ENCODE measurements at regions of chr2 and their contacts with region 1.

Region 1: GRCh38 chr2:155377266-155377680 is 678.8 kb downstream of the KCNJ3 start:
- ATAC-seq: peak in 5 of 8 experiments; percentile 16 to 57 (median 22)
- H3K4me3 ChIP-seq: no peak overlapping the region
- H3K27ac ChIP-seq: no peak overlapping the region
- H3K4me1 ChIP-seq: no peaks in the 10 kb centered on the region

Region 2: GRCh38 chr2:153543639-153544071 is 1833.6 kb before region 1 on chr2:
- in situ Hi-C with region 1: no loop called
- ATAC-seq: peak; percentile 56 to 100 (median 92)
- H3K4me3 ChIP-seq: no peak overlapping the region
- H3K27ac ChIP-seq: no peak overlapping the region
- H3K4me1 ChIP-seq: peaks cover 0 to 11% of the 10 kb centered on the region in 2 donors

Region 3: GRCh38 chr2:156341452-156342253 is 964.4 kb after region 1 on chr2:
- in situ Hi-C with region 1: loop called in 1 of 9 experiments (anchors 25 kb)
- ATAC-seq: peak; percentile 63 to 82 (median 70)
- H3K4me3 ChIP-seq: peak overlapping the region; percentile 59 to 93 (median 80)
- H3K27ac ChIP-seq: peak overlapping the region; percentile 9 to 77
- H3K4me1 ChIP-seq: peaks cover 0 to 3% of the 10 kb centered on the region in 2 donors

Region 4: DNA sequence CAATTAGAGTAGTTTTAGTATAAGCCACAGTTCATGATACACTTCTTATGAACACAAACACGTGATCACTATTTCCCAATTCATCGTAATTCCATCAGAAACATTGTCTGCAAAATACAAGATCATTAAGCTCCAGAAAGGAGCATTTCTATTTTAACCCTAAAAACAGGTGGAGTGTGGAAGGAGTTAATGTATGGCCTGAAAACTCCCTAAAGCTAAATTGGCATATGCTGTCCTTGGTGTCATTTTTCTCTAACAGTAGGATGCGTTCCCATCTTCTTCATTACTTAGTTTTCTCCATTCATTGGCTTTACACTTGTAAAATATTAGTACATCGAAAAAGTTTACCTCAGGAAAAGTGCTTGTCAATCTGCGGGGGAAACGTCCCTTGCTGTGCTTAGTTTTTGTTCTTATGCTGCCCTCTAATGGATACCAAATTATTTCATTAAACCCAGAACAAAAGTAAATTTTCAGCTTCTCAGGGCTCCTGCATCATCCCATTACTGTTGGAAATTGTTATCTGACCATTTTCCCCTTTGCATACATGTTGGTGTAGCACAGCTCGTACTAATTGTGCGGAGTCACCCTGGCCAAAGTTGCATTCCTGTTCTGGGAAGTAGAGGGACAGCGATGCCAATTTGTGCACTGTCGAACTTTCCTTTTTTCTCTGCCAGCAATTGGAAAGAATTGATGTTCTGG is 1212.3 kb after region 1 on chr2:
- in situ Hi-C with region 1: loop called in 1 of 9 experiments (anchors 25 kb)
- ATAC-seq: peak in 5 of 8 experiments; percentile 30 to 82 (median 73)
- H3K4me3 ChIP-seq: no peak overlapping the region
- H3K27ac ChIP-seq: no peak overlapping the region
- H3K4me1 ChIP-seq: peaks cover 3 to 15% of the 10 kb centered on the region in 2 donors

Region 5: DNA sequence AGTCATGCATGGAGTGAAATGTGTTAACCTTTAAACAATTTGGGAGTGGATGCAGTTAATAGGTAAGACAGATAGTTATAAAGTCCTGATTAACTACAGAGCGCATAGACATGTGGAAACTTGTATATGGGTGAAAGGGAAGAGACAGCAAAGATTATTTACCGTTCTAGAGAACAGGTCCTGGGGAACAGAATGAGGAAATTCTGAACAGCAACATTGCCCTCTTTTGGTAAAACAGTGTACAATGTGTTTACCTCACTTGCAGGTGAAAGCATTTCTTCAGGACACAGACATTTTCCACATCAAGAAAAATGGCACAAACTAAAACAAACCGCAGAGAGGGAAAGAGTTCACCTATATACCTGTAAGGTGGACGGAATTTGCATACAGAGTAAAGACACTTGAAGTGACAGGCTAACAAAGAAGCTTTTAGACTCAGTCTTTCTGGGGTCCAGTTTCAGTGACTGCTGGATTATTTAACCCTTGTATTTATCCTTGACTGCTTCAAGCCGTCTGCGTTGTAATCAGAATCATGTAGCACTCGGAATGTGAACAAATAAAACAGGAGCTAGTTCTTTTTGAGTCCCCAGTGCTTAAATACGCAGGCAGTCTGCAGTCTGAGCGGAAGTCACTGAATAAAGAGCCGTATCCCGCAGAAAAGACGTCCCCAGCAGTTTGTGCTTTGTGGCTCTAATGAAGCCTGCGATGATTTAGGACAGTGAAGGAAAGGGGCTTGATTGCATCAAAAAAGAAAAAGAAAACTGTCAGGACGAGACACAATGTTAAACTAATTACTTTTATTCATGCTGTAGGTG is 1515.4 kb after region 1 on chr2:
- in situ Hi-C with region 1: loop called in 1 of 9 experiments (anchors 25 kb)
- ATAC-seq: peak; percentile 88 to 96 (median 93)
- H3K4me3 ChIP-seq: peak overlapping the region; percentile 23 to 33 (median 33)
- H3K27ac ChIP-seq: no peak overlapping the region
- H3K4me1 ChIP-seq: peaks cover 0 to 9% of the 10 kb centered on the region in 2 donors

Region 6: DNA sequence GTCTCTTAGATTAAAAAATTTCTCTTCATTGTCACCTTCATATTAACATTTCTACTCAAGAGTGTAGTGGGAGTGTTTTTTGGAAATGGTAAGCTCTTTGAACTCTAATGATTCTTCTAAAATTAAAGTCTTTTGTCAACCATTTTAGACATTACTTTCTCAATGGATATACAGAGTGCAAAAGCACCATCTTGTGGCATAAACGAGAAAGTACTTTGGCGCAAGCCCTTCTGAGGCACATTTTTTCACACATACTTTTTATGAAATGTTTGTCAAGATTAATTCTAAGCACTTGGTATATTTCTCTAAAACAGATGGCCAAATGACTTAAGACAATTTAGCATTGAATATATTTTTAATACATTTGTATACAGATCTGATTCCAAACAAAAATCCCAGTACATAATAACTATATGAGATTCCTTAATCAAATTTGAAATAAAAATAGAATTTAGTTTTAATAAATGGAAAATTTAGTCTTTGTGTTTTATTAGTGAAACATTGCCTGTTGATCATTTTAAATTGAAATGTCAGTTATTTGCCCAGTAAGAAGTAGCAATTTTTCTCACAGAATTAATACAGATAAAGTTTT is 1816.9 kb after region 1 on chr2:
- in situ Hi-C with region 1: loop called in 4 of 9 experiments (anchors 25 kb)
- ATAC-seq: peak in 3 of 8 experiments; percentile 57 to 60 (median 57)
- H3K4me3 ChIP-seq: no peak overlapping the region
- H3K27ac ChIP-seq: no peak overlapping the region
- H3K4me1 ChIP-seq: no peaks in the 10 kb centered on the region

Region 7: GRCh38 chr2:157221394-157221988 is 1844.2 kb after region 1 on chr2:
- in situ Hi-C with region 1: loop called in 1 of 9 experiments (anchors 25 kb)
- ATAC-seq: peak in 1 of 8 experiments; percentile 23
- H3K4me3 ChIP-seq: no peak overlapping the region
- H3K27ac ChIP-seq: no peak overlapping the region
- H3K4me1 ChIP-seq: no peaks in the 10 kb centered on the region

Measured in motor neuron (in vitro differentiated cells).